Activated T-helper 1 cell treated with anti-CD3 and anti-CD28 coated beads, Interleukin-12 subunit alpha, Interleukin-12 subunit beta, Interleukin-2, Interleukin-4 antibody, amounts not matched to agents 30 ng/mL and 10 ng/mL and 1 ng/mL, durations not matched to agents 14 hours and 24 hours and 36 hours (primary cell): ENCODE measurements at regions of chr6 and their contacts with region 1.

Region 1: DNA sequence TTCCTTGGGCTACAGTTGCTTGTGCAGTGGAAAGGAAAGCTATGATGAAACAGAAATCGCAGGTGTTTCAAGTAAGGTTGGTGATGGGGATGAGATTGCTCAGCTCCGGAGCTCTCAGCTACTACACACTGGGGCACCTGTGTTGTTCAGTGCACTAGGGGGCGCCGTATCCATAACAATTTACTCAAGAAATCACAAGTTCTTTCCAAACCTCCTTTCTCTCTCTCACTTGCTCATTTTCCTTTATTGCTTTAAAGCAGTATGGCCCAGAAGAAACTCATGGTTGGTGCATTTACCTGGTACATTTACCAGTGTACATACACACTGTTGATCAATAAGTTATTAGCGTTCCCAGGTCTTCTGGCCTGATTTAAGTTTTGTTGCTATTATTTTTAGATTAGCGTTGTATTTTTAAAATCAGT is 235.2 kb upstream of the TAB2 start:
- DNase-seq: peak; percentile 81
- H3K4me3 Mint-ChIP-seq: peak overlapping the region; percentile 80
- H3K27ac Mint-ChIP-seq: peak overlapping the region; percentile 92
- H3K4me1 Mint-ChIP-seq: peaks cover 89% of the 10 kb centered on the region
- H3K27me3 Mint-ChIP-seq: no peaks in the 10 kb centered on the region

Region 2: GRCh38 chr6:148980234-148980633 is 102.1 kb before region 1 on chr6:
- intact Hi-C with region 1: no loop called
- DNase-seq: no peak
- H3K4me3 Mint-ChIP-seq: no peak overlapping the region
- H3K27ac Mint-ChIP-seq: no peak overlapping the region
- H3K4me1 Mint-ChIP-seq: no peaks in the 10 kb centered on the region
- H3K27me3 Mint-ChIP-seq: peaks cover 31% of the 10 kb centered on the region

Region 3: GRCh38 chr6:149094156-149094555 is 11.9 kb after region 1 on chr6:
- intact Hi-C with region 1: loop called (anchors 1 kb)
- DNase-seq: no peak
- H3K4me3 Mint-ChIP-seq: peak overlapping the region; percentile 64
- H3K27ac Mint-ChIP-seq: peak overlapping the region; percentile 88
- H3K4me1 Mint-ChIP-seq: peaks cover 78% of the 10 kb centered on the region
- H3K27me3 Mint-ChIP-seq: no peaks in the 10 kb centered on the region

Region 4: GRCh38 chr6:149147938-149148718 is 65.8 kb after region 1 on chr6:
- intact Hi-C with region 1: loop called (anchors 1 kb)
- DNase-seq: peak; percentile 49
- H3K4me3 Mint-ChIP-seq: peak overlapping the region; percentile 34
- H3K27ac Mint-ChIP-seq: peak overlapping the region; percentile 96
- H3K4me1 Mint-ChIP-seq: peaks cover 89% of the 10 kb centered on the region
- H3K27me3 Mint-ChIP-seq: no peaks in the 10 kb centered on the region

Region 5: DNA sequence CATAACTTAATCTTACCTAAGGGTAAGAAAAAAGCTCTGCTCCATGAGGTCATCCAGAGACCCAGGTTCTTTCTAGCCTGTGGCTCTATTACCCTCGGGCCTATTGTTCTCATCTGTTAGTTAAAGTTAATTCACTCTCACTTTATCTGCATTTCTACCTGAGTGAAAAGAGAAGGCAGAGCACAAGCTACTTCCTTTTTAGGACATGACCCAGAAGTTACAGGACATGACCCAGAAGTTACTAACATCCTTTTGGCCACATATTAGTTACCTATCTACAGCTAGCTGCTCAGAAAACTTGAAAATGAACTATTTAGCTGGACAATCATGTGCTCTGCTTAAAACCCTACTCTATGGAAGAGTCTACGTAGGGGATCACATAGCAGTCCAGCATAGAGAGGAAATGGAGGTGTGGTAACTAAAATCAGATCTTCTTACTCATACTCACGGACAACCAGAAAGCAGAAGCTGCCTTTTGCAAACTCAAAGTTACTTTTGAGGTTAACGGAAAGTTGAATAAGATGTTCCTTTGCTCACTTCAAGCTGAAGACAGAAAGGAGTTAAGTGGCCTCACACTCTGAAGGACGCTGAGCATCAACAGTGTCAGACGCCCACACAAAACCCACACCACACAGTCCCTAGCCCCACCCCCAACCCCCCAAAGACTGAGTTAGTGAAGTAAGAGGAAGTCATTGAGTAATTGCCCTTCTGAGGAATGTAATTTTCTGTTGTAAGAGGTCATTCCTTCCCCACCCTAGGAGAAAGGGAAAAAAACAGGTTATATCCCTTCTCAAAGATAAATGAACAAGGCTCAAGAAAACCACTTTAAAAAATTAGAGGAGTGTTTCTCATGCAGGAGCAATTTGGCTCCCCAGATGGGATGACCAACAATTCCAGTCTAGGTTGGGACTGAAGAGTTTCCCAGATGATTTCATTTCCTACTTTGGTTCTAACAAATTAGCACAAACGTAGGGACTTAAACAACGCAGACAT is 189.3 kb after region 1 on chr6:
- intact Hi-C with region 1: loop called (anchors 5 kb)
- DNase-seq: no peak
- H3K4me3 Mint-ChIP-seq: peak overlapping the region; percentile 62
- H3K27ac Mint-ChIP-seq: peak overlapping the region; percentile 94
- H3K4me1 Mint-ChIP-seq: peaks cover 56% of the 10 kb centered on the region
- H3K27me3 Mint-ChIP-seq: no peaks in the 10 kb centered on the region

Region 6: DNA sequence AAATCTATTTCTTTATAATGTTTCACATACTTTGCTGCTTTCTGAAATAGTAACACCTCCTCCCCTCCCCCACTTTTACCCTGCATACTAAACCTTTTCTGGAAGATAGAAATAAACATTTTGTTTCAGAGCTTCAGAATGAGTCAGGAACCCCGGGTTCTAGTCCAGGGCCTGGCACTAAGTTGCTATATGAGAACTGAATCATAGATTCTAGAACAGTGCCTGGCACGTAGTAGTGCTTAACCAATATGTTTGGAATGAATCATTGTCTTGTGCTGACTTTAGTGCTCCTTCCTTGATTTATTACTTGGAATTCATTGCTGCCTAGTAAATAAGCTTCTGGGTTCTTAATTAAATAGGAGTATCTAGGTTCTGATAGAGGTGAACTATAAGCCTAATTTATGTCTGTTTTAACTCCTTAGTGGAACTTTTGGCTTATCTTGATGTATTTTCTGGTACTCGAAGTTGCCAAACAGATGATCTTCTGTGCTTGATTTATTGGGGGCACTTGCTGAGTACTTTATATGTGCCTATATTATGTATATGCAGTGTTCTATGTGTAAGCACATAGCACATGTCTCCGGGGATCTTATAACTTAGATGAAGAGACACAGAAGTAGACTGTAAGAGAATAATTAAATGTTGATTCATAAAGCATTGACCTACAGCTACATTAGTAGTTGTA is 253.8 kb after region 1 on chr6:
- intact Hi-C with region 1: loop called (anchors 1 kb)
- DNase-seq: peak; percentile 22
- H3K4me3 Mint-ChIP-seq: peak overlapping the region; percentile 76
- H3K27ac Mint-ChIP-seq: peak overlapping the region; percentile 93
- H3K4me1 Mint-ChIP-seq: peaks cover 94% of the 10 kb centered on the region
- H3K27me3 Mint-ChIP-seq: no peaks in the 10 kb centered on the region

Region 7: DNA sequence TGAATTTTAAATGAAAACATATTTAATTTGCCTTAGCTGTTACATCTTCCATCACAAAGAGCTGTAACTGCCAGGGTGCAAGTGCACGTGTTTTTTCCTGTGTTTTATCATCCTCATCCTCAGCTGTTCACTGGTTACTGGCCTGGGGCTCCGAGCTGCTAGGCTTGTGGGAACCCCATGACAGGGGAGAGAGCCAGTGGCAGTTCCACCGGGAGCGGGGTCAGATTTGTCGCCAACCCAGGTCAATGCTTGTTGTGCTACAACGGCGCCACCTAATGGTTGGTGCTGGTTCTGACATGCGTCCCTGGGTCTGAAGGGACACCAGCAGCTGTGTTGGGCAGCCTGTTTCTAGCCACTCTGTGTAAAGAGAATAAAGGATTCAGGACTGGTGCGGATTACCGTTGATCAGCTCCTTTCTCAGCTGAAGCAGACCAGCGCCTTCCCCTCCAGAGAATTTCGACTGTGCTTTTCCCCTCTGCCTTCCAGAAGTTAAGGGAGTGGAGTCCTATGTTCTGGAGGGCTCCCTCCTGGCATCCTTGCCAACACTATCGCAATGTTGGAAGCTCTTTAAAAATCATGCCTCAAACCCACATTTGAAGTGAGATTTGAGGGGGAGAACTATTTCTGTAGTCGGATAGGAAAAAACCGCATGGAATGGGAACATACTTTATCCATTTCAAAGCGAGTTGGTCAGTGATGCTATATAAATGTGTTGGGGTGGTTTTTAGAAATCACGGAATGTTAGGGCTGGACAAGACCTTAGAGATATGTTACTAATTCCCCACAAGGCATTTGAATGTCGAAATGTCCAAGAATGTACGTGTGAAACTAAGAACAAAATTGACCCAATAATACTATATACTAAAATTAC is 349.8 kb after region 1 on chr6:
- intact Hi-C with region 1: loop called (anchors 1 kb)
- DNase-seq: peak; percentile 79
- H3K4me3 Mint-ChIP-seq: peak overlapping the region; percentile 48
- H3K27ac Mint-ChIP-seq: peak overlapping the region; percentile 79
- H3K4me1 Mint-ChIP-seq: peaks cover 23% of the 10 kb centered on the region
- H3K27me3 Mint-ChIP-seq: no peaks in the 10 kb centered on the region

Region 8: DNA sequence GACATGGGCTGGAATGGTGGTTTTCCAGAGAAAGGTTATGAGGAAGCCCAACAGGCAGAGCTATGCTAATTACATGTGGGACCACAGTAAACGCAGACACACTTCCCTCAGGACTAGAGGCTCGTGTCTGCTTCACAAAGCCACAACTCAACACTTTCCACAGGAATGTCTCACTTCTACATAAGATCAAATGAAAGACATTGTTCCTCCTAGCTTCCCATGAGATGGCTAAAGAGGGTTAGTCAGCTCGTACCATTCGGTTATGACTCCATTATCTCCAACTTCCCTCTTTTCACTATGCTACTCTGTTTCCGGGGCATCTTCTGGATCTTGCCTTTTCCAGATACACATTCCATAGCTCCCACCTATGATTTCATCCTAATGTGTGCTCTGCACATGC is 431.6 kb after region 1 on chr6:
- intact Hi-C with region 1: loop called (anchors 2 kb)
- DNase-seq: no peak
- H3K4me3 Mint-ChIP-seq: no peak overlapping the region
- H3K27ac Mint-ChIP-seq: no peak overlapping the region
- H3K4me1 Mint-ChIP-seq: peaks cover 47% of the 10 kb centered on the region
- H3K27me3 Mint-ChIP-seq: no peaks in the 10 kb centered on the region